Gastrocnemius medialis (tissue), 4 donors: ENCODE measurements at regions of chr3 and their contacts with region 1.

Region 1: GRCh38 chr3:126180477-126181397 is at the start of gene ALDH1L1:
- DNase-seq: peak; percentile 94 to 97
- ATAC-seq: peak; percentile 86
- H3K4me3 ChIP-seq: peak within 1 kb of the TSS; percentile 77 to 93 (median 88)
- H3K27ac ChIP-seq: peak within 1 kb of the TSS; percentile 99 to 100 (median 100)
- H3K4me1 ChIP-seq: peaks cover 29 to 49% of the 10 kb centered on the region in 2 donors
- H3K27me3 ChIP-seq: no peaks in the 10 kb centered on the region
- CTCF ChIP-seq: peak in 1 of 5 experiments; percentile 14
- POLR2A ChIP-seq: peak; percentile 80 to 83
- total RNA-seq, gene ALDH1L1: 43.5 to 108 (median 69.0) TPM

Region 2: DNA sequence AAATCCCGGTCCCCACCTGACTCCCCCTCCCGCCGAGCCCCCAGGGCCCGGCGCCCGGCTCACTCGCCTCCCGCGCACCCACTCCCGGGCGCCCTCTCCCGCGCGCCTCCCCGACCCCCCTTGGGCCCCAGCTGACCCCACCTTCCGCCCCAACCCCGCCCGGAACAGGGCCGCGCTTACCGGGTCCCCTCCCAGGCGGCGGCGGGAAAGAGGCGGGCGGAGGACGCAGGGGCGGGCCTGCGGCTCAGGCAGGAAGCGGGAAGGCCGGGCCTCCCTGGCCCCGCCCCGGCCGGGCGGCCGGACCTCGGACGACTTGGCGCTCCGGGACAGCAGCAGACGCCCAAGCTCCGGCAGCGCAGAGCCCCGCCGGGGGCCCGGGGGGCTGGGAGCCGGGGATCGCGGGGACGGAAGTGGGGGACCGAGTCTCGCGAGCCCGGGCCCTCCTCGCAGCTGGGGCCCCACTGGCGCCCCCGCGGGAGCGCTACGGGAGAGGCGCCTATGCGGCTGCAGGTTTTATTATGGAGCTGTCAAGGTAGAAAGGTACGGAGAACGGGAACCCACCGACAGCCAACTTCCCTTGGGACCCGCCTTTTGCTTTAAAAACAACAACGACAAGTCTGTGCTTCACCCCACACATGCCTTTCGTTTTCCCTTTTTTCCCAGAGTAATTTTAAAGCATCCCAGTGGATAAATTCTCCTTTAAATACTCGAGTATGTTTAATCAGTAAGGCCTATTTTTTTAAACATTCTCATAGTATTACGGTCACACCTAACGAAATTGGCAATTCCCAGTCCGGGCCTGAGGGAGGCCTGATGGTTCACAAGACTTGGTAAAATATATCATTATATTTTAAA is 96.6 kb before region 1 on chr3 and contains the start of gene SLC41A3:
- in situ Hi-C with region 1: no loop called
- intact Hi-C with region 1: loop called (anchors 2 kb)
- DNase-seq: peak; percentile 78 to 85
- ATAC-seq: peak; percentile 61 to 65
- H3K4me3 ChIP-seq: peak within 1 kb of the TSS; percentile 61 to 86 (median 82)
- H3K27ac ChIP-seq: peak within 1 kb of the TSS; percentile 94 to 97 (median 96)
- H3K4me1 ChIP-seq: peaks cover 18 to 22% of the 10 kb centered on the region in 2 donors
- H3K27me3 ChIP-seq: no peaks in the 10 kb centered on the region
- CTCF ChIP-seq: peak; percentile 41 to 50 (median 46)
- POLR2A ChIP-seq: peak; percentile 78 to 81
- total RNA-seq, gene SLC41A3: 43.1 to 76.2 (median 56.7) TPM

Region 3: GRCh38 chr3:126100634-126101301 is 80.0 kb before region 1 on chr3:
- in situ Hi-C with region 1: no loop called
- intact Hi-C with region 1: loop called (anchors 2 kb)
- DNase-seq: peak; percentile 49 to 74
- ATAC-seq: peak; percentile 72 to 76
- H3K4me3 ChIP-seq: peak overlapping the region in 3 of 4 donors; percentile 31 to 42 (median 32)
- H3K27ac ChIP-seq: peak overlapping the region; percentile 84 to 87 (median 84)
- H3K4me1 ChIP-seq: peaks cover 64 to 65% of the 10 kb centered on the region in 2 donors
- H3K27me3 ChIP-seq: no peaks in the 10 kb centered on the region
- CTCF ChIP-seq: no peak
- POLR2A ChIP-seq: peak; percentile 33 to 61

Region 4: GRCh38 chr3:126134219-126134975 is 46.3 kb before region 1 on chr3:
- in situ Hi-C with region 1: no loop called
- intact Hi-C with region 1: loop called (anchors 5 kb)
- DNase-seq: peak; percentile 25 to 73
- ATAC-seq: peak; percentile 80 to 93
- H3K4me3 ChIP-seq: no peak overlapping the region
- H3K27ac ChIP-seq: peak overlapping the region in 2 of 4 donors; percentile 12 to 14
- H3K4me1 ChIP-seq: no peaks in the 10 kb centered on the region
- H3K27me3 ChIP-seq: no peaks in the 10 kb centered on the region
- CTCF ChIP-seq: peak; percentile 87 to 96 (median 91)
- POLR2A ChIP-seq: no peak

Region 5: GRCh38 chr3:126197854-126198584 is 17.3 kb after region 1 on chr3:
- in situ Hi-C with region 1: no loop called
- intact Hi-C with region 1: loop called (anchors 1 kb)
- DNase-seq: peak; percentile 68 to 82
- ATAC-seq: peak; percentile 97 to 100
- H3K4me3 ChIP-seq: peak overlapping the region in 1 of 4 donors; percentile 15
- H3K27ac ChIP-seq: peak overlapping the region; percentile 27 to 65 (median 44)
- H3K4me1 ChIP-seq: peaks cover 0 to 8% of the 10 kb centered on the region in 2 donors
- H3K27me3 ChIP-seq: no peaks in the 10 kb centered on the region
- CTCF ChIP-seq: peak; percentile 75 to 86 (median 80)
- POLR2A ChIP-seq: no peak

Region 6: GRCh38 chr3:126212602-126213378 is 32.1 kb after region 1 on chr3:
- in situ Hi-C with region 1: no loop called
- intact Hi-C with region 1: loop called (anchors 2 kb)
- DNase-seq: peak in 1 of 2 donors; percentile 36
- ATAC-seq: peak; percentile 78 to 79
- H3K4me3 ChIP-seq: peak overlapping the region; percentile 54 to 84 (median 62)
- H3K27ac ChIP-seq: peak overlapping the region; percentile 8 to 60 (median 36)
- H3K4me1 ChIP-seq: peaks cover 16 to 19% of the 10 kb centered on the region in 2 donors
- H3K27me3 ChIP-seq: peaks cover 0 to 11% (median 0%) of the 10 kb centered on the region in 3 donors
- CTCF ChIP-seq: peak in 4 of 5 experiments; percentile 43 to 71 (median 48)
- POLR2A ChIP-seq: no peak

Region 7: DNA sequence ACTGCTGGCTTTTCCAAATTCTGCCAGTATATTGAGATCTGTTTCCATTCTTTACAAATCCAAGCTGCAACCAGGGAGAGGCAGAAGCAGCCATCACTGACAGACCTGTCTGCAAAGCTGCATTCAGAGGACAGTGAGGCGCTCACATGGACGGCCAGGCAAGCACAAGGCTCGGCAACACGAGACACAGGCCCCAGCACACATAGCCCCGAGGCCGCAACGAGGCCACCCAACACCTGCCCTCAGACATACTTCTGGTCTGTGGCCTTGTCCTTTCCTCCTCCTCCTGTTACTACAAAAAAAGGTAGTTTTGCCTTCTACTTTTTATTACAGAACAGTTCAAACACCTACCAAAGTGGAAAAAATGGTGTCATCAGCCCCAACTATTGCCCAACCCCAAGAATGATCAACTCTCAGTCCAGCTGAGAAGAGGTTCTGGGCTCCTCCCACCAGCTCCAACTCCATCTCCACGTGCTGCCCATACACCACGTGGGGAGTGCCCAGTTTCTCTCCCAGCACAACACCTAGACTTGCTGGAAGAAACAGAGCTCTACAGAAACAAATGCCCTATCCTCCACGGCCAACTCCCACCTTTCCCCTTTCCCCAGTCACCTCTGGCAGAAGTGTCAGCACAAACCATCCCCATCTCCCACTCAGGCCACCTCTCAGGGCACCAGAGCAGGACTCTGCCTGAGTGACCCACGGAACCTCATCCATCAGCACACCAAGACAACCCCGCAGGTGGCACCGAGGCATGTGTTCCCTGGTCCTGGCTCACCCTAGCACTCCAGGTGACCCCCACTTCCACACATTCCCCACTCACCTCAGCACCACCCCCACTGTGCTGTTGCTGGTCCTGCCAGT is 287.5 kb after region 1 on chr3:
- in situ Hi-C with region 1: no loop called
- intact Hi-C with region 1: loop called (anchors 5 kb)
- DNase-seq: peak; percentile 46 to 61
- ATAC-seq: peak; percentile 33
- H3K4me3 ChIP-seq: no peak overlapping the region
- H3K27ac ChIP-seq: peak overlapping the region; percentile 94 to 97 (median 96)
- H3K4me1 ChIP-seq: peaks cover 91 to 95% of the 10 kb centered on the region in 2 donors
- H3K27me3 ChIP-seq: no peaks in the 10 kb centered on the region
- CTCF ChIP-seq: no peak
- POLR2A ChIP-seq: peak in 1 of 2 donors; percentile 30